ENCODE measurements at regions of chr1 and their contacts with region 1.

Region 1: GRCh38 chr1:183604038-183604808 is 14.0 kb upstream of the NCF2 start:
- DNase-seq: peak; percentile 89
- ATAC-seq: peak; percentile 71
- H3K4me3 ChIP-seq: no peak overlapping the region
- H3K27ac ChIP-seq: peak overlapping the region; percentile 64
- H3K4me1 ChIP-seq: peaks cover 61% of the 10 kb centered on the region
- H3K27me3 ChIP-seq: no peaks in the 10 kb centered on the region
- CTCF ChIP-seq: no peak
- EP300 ChIP-seq: peak; percentile 25 to 72; a peak in 2 of 4 replicates
- POLR2A ChIP-seq: no peak
- RAD21 ChIP-seq: no peak

Region 2: GRCh38 chr1:183477986-183478781 is 126.0 kb before region 1 on chr1:
- CTCF ChIA-PET with region 1: interaction called, 3 read pairs
- POLR2A ChIA-PET with region 1: interaction called, 10 read pairs
- RAD21 ChIA-PET with region 1: interaction called, 3 read pairs
- SMC1A ChIA-PET with region 1: interaction called, 6 read pairs
- in situ Hi-C with region 1: no loop called
- intact Hi-C with region 1: loop called (anchors 5 kb)
- DNase-seq: no peak
- ATAC-seq: peak; percentile 50
- H3K4me3 ChIP-seq: peak overlapping the region; percentile 55
- H3K27ac ChIP-seq: peak overlapping the region; percentile 89
- H3K4me1 ChIP-seq: peaks cover 48% of the 10 kb centered on the region
- H3K27me3 ChIP-seq: no peaks in the 10 kb centered on the region
- CTCF ChIP-seq: no peak
- EP300 ChIP-seq: 0 out of 4 replicates have a peak, but pooled peaks of 1 of the 2 experiments have one; percentile 10
- POLR2A ChIP-seq: no peak
- RAD21 ChIP-seq: no peak

Region 3: GRCh38 chr1:183635606-183636333 is 31.5 kb after region 1 on chr1 and contains the start of gene ARPC5:
- CTCF ChIA-PET with region 1: interaction called, 10 read pairs
- POLR2A ChIA-PET with region 1: interaction called, 27 read pairs
- RAD21 ChIA-PET with region 1: interaction called, 17 read pairs
- SMC1A ChIA-PET with region 1: interaction called, 17 read pairs
- in situ Hi-C with region 1: no loop called
- intact Hi-C with region 1: loop called (anchors 1 kb)
- DNase-seq: peak; percentile 95
- ATAC-seq: peak; percentile 86
- H3K4me3 ChIP-seq: peak within 1 kb of the TSS; percentile 93
- H3K27ac ChIP-seq: peak within 1 kb of the TSS; percentile 96
- H3K4me1 ChIP-seq: 0 out of 2 replicates have a peak, but pooled peaks cover 3% of the 10 kb centered on the region
- H3K27me3 ChIP-seq: no peaks in the 10 kb centered on the region
- CTCF ChIP-seq: no peak
- EP300 ChIP-seq: no peak
- POLR2A ChIP-seq: peak; percentile 93
- RAD21 ChIP-seq: no peak
- polyA plus RNA-seq, gene ARPC5: 246 to 274 TPM

Region 4: DNA sequence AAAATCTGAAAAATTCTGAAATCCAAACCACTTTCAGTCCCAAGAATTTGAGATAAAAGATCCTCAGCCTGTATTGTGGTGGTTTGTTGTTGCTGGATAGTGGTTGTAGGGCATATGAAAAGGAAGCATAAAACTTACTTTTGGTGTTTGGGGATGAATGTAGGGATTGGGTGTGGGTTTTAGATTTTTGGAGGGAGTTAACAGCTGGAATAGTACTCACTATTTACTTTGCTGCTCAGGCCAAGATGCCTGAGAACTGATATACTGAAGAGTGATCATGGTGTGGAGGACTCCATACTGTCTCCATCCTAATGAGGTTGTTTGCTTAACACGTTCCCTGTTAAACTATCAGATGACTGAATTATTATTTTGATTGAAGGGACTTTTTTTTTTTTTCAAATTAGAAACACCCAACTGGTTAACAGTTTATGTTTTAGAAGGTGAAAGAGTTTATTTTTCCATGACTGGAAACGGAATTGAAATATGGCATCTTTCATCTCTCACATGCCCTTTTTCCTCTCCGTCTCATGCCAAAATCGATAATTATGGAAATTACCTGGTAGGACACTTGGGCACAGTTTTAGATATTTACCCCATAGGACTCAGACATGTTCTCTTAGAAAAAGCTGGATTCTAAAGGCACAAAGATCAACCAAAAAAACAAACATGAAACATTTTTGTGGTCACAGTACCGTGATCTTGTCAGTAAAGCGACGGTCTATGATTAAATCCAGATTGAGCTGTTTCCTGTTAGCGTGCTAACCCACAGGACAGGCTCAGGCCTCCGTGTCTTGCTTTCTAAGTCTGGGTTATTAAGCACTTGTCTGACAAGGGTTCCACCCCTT is 237.9 kb after region 1 on chr1:
- CTCF ChIA-PET with region 1: interaction called, 4 read pairs
- POLR2A ChIA-PET with region 1: no interaction called
- RAD21 ChIA-PET with region 1: no interaction called
- SMC1A ChIA-PET with region 1: interaction called, 3 read pairs
- in situ Hi-C with region 1: no loop called
- intact Hi-C with region 1: loop called (anchors 5 kb)
- DNase-seq: peak; percentile 85
- ATAC-seq: peak; percentile 93
- H3K4me3 ChIP-seq: peak overlapping the region; percentile 12
- H3K27ac ChIP-seq: peak overlapping the region; percentile 99
- H3K4me1 ChIP-seq: peaks cover 46% of the 10 kb centered on the region
- H3K27me3 ChIP-seq: no peaks in the 10 kb centered on the region
- CTCF ChIP-seq: no peak
- EP300 ChIP-seq: peak; percentile 74 to 75; a peak in 3 of 4 replicates
- POLR2A ChIP-seq: peak; percentile 53; the same call in 1 of the 2 replicates
- RAD21 ChIP-seq: 0 out of 2 replicates have a peak, but pooled peaks have one; percentile 22

Measured in GM12878 (cell line).